MCF 10A (cell line): ENCODE measurements at regions of chr2 and their contacts with region 1.

Region 1: GRCh38 chr2:187453078-187453641 is 5.1 kb upstream of the CALCRL start:
- DNase-seq: peak; percentile 56
- H3K4me3 Mint-ChIP-seq: no peak overlapping the region
- H3K27ac Mint-ChIP-seq: no peak overlapping the region
- H3K4me1 Mint-ChIP-seq: peaks cover 5% of the 10 kb centered on the region
- H3K27me3 Mint-ChIP-seq: no peaks in the 10 kb centered on the region
- CTCF ChIP-seq: peak; percentile 53

Region 2: DNA sequence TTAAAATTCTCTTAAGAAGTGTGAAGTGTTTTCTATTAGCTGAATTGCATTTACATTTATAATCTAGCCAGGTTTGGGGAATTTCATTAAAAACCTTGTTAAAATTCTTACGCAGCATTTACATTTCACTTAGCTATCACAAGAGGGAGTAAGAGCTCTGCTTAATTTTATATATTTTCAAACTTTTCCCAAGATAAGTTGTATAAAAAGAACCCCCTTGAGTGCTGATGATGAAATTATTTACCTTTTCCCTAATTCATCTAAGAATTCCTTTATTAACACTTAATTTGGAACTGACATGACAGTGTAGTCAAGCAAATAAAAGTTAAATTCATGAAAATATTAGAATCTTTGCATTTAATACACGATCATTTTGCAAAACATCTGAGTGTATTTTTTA is 549.9 kb before region 1 on chr2:
- CTCF ChIA-PET with region 1: interaction called, 6 read pairs
- POLR2A ChIA-PET with region 1: no interaction called
- intact Hi-C with region 1: loop called (anchors 1 kb)
- DNase-seq: peak; percentile 11
- H3K4me3 Mint-ChIP-seq: no peak overlapping the region
- H3K27ac Mint-ChIP-seq: no peak overlapping the region
- H3K4me1 Mint-ChIP-seq: no peaks in the 10 kb centered on the region
- H3K27me3 Mint-ChIP-seq: no peaks in the 10 kb centered on the region
- CTCF ChIP-seq: peak; percentile 21

Region 3: DNA sequence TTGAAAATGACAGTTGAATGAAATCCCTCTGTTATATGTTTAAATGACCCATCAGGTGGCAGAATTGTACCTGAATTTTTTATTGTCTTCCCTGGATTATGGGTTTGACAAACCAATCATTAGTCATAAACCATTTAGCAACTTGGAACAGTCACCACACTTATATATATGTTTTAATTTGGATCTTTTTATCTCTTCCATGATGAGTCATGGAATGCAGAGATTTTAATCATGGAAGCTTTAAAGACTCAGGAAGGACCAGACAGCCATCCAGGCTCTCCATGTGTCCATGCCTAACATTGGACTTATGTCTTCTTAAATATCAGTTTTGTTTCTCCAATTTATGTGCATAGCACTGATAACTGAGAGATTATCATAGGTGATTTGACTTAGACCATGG is 415.9 kb before region 1 on chr2:
- CTCF ChIA-PET with region 1: interaction called, 4 read pairs
- POLR2A ChIA-PET with region 1: no interaction called
- intact Hi-C with region 1: loop called (anchors 2 kb)
- DNase-seq: peak; percentile 6
- H3K4me3 Mint-ChIP-seq: no peak overlapping the region
- H3K27ac Mint-ChIP-seq: no peak overlapping the region
- H3K4me1 Mint-ChIP-seq: no peaks in the 10 kb centered on the region
- H3K27me3 Mint-ChIP-seq: no peaks in the 10 kb centered on the region
- CTCF ChIP-seq: no peak

Region 4: GRCh38 chr2:187138265-187138664 is 314.9 kb before region 1 on chr2:
- CTCF ChIA-PET with region 1: interaction called, 4 read pairs
- POLR2A ChIA-PET with region 1: no interaction called
- intact Hi-C with region 1: loop called (anchors 1 kb)
- DNase-seq: peak; percentile 43
- H3K4me3 Mint-ChIP-seq: no peak overlapping the region
- H3K27ac Mint-ChIP-seq: no peak overlapping the region
- H3K4me1 Mint-ChIP-seq: no peaks in the 10 kb centered on the region
- H3K27me3 Mint-ChIP-seq: no peaks in the 10 kb centered on the region
- CTCF ChIP-seq: peak; percentile 28

Region 5: GRCh38 chr2:187299122-187299906 is 153.8 kb before region 1 on chr2:
- CTCF ChIA-PET with region 1: interaction called, 5 read pairs
- POLR2A ChIA-PET with region 1: no interaction called
- intact Hi-C with region 1: loop called (anchors 1 kb)
- DNase-seq: peak; percentile 47
- H3K4me3 Mint-ChIP-seq: no peak overlapping the region
- H3K27ac Mint-ChIP-seq: no peak overlapping the region
- H3K4me1 Mint-ChIP-seq: peaks cover 6% of the 10 kb centered on the region
- H3K27me3 Mint-ChIP-seq: no peaks in the 10 kb centered on the region
- CTCF ChIP-seq: peak; percentile 48

Region 6: DNA sequence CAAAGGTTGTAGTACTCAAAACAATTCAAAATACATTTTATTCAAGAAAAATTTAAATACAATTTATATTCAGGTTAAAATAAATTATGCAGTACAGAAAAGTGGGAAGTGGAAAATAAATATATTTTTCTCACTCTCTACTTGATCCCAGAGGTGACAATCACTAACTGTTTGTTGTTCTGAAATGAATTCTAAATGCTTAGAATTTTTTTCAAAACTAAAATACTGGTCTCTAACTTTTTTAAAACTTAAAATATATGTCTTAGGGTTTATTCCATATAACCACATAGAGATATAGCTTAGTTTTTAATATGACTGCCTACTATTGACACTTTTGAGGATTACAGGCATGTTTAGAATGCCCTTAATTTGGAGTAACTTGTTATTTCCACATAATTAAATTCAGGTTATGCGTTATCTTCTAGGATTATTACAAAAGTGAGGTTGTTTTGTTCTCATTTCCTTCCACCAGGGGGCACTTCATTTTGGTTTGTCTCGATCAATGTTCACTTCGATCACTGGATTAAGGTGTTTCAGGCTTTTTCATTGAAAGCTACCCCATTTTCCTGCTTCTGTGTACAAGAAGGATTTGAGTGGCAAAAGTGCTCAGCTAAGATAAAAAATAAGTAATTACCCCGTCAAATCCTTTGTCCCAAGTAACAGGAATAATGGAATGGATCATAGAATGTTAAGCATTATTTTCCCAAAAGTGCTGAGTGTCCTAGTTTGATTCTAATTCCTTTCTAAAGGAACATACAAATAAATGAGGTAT is 128.2 kb after region 1 on chr2:
- CTCF ChIA-PET with region 1: no interaction called
- POLR2A ChIA-PET with region 1: no interaction called
- intact Hi-C with region 1: no loop called
- DNase-seq: peak; percentile 77
- H3K4me3 Mint-ChIP-seq: peak overlapping the region; percentile 58
- H3K27ac Mint-ChIP-seq: peak overlapping the region; percentile 81
- H3K4me1 Mint-ChIP-seq: peaks cover 9% of the 10 kb centered on the region
- H3K27me3 Mint-ChIP-seq: no peaks in the 10 kb centered on the region
- CTCF ChIP-seq: peak; percentile 76